ENCODE measurements at regions of chr14 and their contacts with region 1.

Region 1: GRCh38 chr14:30270200-30271161 is 288.5 kb upstream of the G2E3 start:
- DNase-seq: peak; percentile 90 to 94
- ATAC-seq: peak; percentile 91
- H3K4me3 ChIP-seq: peak overlapping the region in 1 of 2 donors; percentile 55
- H3K27ac ChIP-seq: no peak overlapping the region
- H3K4me1 ChIP-seq: no peaks in the 10 kb centered on the region
- H3K27me3 ChIP-seq: no peaks in the 10 kb centered on the region

Region 2: GRCh38 chr14:30129807-30130206 is 140.7 kb before region 1 on chr14:
- intact Hi-C with region 1: loop called in 1 of 2 experiments (anchors 10 kb)
- DNase-seq: no peak
- ATAC-seq: no peak
- H3K4me3 ChIP-seq: no peak overlapping the region
- H3K27ac ChIP-seq: no peak overlapping the region
- H3K4me1 ChIP-seq: peaks cover 0 to 4% of the 10 kb centered on the region in 2 donors
- H3K27me3 ChIP-seq: no peaks in the 10 kb centered on the region